ENCODE measurements at regions of chr10 and their contacts with region 1.

Region 1: GRCh38 chr10:122495406-122496340 is 34.3 kb downstream of the HTRA1 start:
- DNase-seq: no peak
- H3K4me3 ChIP-seq: no peak overlapping the region
- H3K27ac ChIP-seq: peak overlapping the region; percentile 81
- H3K4me1 ChIP-seq: peaks cover 77% of the 10 kb centered on the region
- H3K27me3 ChIP-seq: no peaks in the 10 kb centered on the region
- CTCF ChIP-seq: no peak
- POLR2A ChIP-seq: no peak

Region 2: DNA sequence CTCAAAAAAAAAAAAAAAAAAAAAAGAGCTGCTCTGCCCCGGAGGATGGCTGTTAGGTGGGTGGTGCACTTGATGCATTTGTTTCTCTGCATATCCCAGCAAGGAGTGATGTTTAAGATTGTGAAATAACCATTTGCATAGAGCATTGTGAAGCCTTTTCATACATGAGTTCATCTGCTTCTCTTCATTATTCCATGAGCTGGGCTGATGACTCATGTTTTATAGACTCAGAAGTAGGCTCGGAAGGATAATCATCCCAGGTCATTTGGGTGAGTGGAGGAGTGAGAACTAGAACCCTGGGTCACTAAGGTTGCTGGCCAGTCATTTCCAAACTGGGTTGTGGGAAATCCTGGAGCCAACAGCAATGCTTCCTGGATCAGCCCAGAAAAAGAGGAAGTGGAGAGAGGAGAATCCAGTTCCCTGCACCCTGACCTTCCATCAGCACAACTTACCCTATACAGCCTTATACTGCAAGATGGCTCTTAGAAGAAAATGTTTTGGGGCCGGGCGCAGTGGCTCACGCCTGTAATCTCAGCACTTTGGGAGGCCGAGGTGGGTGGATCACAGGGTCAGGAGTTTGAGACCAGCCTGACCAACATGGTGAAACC is 461.4 kb before region 1 on chr10:
- intact Hi-C with region 1: no loop called
- DNase-seq: no peak
- H3K4me3 ChIP-seq: no peak overlapping the region
- H3K27ac ChIP-seq: no peak overlapping the region
- H3K4me1 ChIP-seq: peaks cover 7% of the 10 kb centered on the region
- H3K27me3 ChIP-seq: no peaks in the 10 kb centered on the region
- CTCF ChIP-seq: no peak
- POLR2A ChIP-seq: no peak

Region 3: GRCh38 chr10:122374237-122374869 is 121.3 kb before region 1 on chr10 and contains the start of gene PLEKHA1:
- intact Hi-C with region 1: loop called (anchors 10 kb)
- DNase-seq: peak in 1 of 2 donors; percentile 96
- H3K4me3 ChIP-seq: peak within 1 kb of the TSS; percentile 80 to 90
- H3K27ac ChIP-seq: peak within 1 kb of the TSS; percentile 96
- H3K4me1 ChIP-seq: peaks cover 23% of the 10 kb centered on the region
- H3K27me3 ChIP-seq: no peaks in the 10 kb centered on the region
- CTCF ChIP-seq: no peak
- POLR2A ChIP-seq: peak in 1 of 2 donors; percentile 86
- total RNA-seq, gene PLEKHA1: 28.7 TPM

Region 4: DNA sequence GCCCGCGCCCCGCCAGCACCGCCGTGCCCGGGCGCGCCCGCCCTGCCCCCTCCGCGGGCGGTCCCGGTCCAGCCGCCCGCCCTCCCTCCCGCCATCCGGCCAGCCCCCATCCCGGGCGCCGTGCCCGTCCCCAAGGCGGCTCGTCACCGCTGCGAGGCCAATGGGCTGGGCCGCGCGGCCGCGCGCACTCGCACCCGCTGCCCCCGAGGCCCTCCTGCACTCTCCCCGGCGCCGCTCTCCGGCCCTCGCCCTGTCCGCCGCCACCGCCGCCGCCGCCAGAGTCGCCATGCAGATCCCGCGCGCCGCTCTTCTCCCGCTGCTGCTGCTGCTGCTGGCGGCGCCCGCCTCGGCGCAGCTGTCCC is 34.3 kb before region 1 on chr10 and contains the start of gene HTRA1:
- intact Hi-C with region 1: loop called (anchors 5 kb)
- DNase-seq: no peak
- H3K4me3 ChIP-seq: peak within 1 kb of the TSS; percentile 75 to 94
- H3K27ac ChIP-seq: peak within 1 kb of the TSS; percentile 93
- H3K4me1 ChIP-seq: peaks cover 42% of the 10 kb centered on the region
- H3K27me3 ChIP-seq: no peaks in the 10 kb centered on the region
- CTCF ChIP-seq: no peak
- POLR2A ChIP-seq: peak in 1 of 2 donors; percentile 60
- total RNA-seq, gene HTRA1: 116 TPM

Region 5: GRCh38 chr10:122822973-122823690 is 327.5 kb after region 1 on chr10:
- intact Hi-C with region 1: no loop called
- DNase-seq: no peak
- H3K4me3 ChIP-seq: no peak overlapping the region
- H3K27ac ChIP-seq: no peak overlapping the region
- H3K4me1 ChIP-seq: no peaks in the 10 kb centered on the region
- H3K27me3 ChIP-seq: no peaks in the 10 kb centered on the region
- CTCF ChIP-seq: no peak
- POLR2A ChIP-seq: no peak

Measured in vagina (tissue), 2 donors.